GM12878 (cell line): ENCODE measurements at regions of chr3 and their contacts with region 1.

Region 1: DNA sequence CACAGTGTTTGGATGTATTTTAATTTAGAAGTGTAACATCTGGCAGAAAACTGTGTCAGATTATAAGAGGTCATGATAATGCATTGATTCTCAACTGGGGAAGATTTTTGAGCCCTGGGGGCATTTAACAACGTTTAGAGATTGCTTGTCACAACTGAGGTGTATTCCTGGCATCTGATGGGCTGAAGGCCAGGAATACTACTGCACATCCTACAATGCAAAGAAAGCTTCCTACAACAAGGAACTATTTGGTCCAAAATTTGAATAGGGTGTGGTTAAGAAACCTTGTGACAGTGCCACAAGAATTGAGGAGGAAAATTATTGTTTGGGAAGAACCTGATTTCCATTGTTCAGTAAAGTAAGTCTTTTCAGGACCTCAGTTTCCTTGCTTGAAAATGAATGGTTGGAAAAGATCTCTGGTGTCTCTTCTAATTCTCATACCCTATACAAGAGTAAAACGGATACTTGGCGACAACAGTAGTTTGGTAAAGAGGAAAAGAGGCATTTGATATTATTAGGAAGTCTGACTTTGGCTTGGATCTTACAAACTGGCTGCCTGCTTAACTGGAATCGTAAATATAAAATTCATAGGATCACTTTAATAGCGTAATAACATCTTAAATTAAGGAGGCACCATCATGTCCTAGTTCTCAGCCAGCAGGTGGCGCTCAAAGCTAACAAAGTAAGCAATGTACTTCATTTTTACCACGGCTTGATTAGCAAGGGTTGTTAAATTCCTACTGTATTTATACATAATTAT is 4.3 kb downstream of the DAZL start:
- DNase-seq: no peak
- ATAC-seq: peak; percentile 86
- H3K4me3 ChIP-seq: no peak overlapping the region
- H3K27ac ChIP-seq: no peak overlapping the region
- H3K4me1 ChIP-seq: peaks cover 7% of the 10 kb centered on the region
- H3K27me3 ChIP-seq: no peaks in the 10 kb centered on the region
- CTCF ChIP-seq: peak; percentile 56 to 81 (median 69)
- EP300 ChIP-seq: no peak
- POLR2A ChIP-seq: no peak
- RAD21 ChIP-seq: peak; percentile 96

Region 2: DNA sequence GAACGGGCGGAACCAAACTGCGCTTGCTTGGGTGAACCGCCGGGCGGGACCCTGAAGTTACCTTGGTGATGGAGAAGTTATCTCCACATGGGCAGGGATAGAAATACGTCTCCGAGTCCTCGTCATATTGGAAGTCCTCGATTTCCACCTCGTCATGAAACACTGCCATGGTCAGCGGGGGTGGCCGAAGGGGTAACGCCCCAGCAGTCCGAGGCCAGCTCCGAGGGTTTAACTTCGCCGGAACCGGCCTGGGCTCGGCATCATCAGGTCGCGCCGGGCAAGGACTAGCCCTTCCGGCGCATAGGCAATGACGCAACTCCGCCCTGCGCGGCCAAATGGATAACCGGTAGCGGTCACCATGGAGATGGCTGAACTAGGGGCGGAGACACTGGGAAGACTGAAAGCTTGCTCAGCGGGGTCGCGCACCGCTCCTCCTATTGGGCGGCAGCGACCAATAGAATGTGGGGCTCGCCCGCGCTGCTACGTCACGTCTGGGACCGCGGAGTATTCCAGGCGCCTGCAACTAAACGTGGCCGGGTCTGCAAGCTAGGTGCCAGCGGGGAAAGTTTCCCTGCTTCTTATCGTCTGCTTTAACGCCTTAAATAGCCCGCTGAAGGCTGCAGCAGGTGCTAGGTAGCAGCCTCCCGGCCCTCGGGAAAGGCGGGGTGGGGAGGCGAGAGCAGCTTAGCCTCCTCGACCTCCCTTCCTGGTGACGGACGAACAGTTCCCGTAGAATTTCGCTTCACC is 336.1 kb before region 1 on chr3 and contains the starts of genes DPH3 and OXNAD1:
- CTCF ChIA-PET with region 1: interaction called, 12 read pairs
- POLR2A ChIA-PET with region 1: no interaction called
- RAD21 ChIA-PET with region 1: interaction called, 4 read pairs
- SMC1A ChIA-PET with region 1: interaction called, 4 read pairs
- in situ Hi-C with region 1: no loop called
- intact Hi-C with region 1: no loop called
- DNase-seq: peak; percentile 95
- ATAC-seq: peak; percentile 98
- H3K4me3 ChIP-seq: peak within 1 kb of the TSS; percentile 91
- H3K27ac ChIP-seq: peak within 1 kb of the TSS; percentile 86
- H3K4me1 ChIP-seq: peaks cover 3% of the 10 kb centered on the region
- H3K27me3 ChIP-seq: no peaks in the 10 kb centered on the region
- CTCF ChIP-seq: no peak
- EP300 ChIP-seq: no peak
- POLR2A ChIP-seq: peak; percentile 58
- RAD21 ChIP-seq: no peak
- polyA plus RNA-seq, gene DPH3: 67.1 to 71.8 TPM
- polyA plus RNA-seq, gene OXNAD1: 5.6 to 6.9 TPM

Region 3: DNA sequence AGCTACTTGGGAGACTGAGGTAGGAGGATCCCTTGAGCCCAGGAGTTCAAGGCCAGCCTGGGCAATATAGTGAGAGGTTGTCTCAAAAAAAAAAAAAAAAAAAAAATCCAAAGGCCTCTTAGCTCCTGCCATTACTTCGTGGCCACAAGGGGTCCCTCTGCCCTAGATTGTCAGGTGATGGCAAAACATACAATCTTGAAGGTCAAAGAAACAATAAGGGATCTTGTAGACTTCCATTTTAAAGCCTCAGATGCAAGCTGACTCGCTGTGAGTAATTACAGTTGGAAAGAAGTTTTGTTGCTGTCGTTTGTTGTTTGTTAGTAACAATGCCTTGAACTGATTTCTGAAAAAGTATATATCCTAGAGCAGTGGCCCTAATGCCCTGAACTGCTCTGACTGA is 227.9 kb after region 1 on chr3:
- CTCF ChIA-PET with region 1: interaction called, 27 read pairs
- POLR2A ChIA-PET with region 1: no interaction called
- RAD21 ChIA-PET with region 1: interaction called, 7 read pairs
- SMC1A ChIA-PET with region 1: interaction called, 12 read pairs
- in situ Hi-C with region 1: no loop called
- intact Hi-C with region 1: loop called (anchors 5 kb)
- DNase-seq: no peak
- ATAC-seq: peak; percentile 90
- H3K4me3 ChIP-seq: no peak overlapping the region
- H3K27ac ChIP-seq: no peak overlapping the region
- H3K4me1 ChIP-seq: peaks cover 8% of the 10 kb centered on the region
- H3K27me3 ChIP-seq: no peaks in the 10 kb centered on the region
- CTCF ChIP-seq: peak; percentile 58 to 65 (median 60)
- EP300 ChIP-seq: no peak
- POLR2A ChIP-seq: no peak
- RAD21 ChIP-seq: peak; percentile 93

Region 4: DNA sequence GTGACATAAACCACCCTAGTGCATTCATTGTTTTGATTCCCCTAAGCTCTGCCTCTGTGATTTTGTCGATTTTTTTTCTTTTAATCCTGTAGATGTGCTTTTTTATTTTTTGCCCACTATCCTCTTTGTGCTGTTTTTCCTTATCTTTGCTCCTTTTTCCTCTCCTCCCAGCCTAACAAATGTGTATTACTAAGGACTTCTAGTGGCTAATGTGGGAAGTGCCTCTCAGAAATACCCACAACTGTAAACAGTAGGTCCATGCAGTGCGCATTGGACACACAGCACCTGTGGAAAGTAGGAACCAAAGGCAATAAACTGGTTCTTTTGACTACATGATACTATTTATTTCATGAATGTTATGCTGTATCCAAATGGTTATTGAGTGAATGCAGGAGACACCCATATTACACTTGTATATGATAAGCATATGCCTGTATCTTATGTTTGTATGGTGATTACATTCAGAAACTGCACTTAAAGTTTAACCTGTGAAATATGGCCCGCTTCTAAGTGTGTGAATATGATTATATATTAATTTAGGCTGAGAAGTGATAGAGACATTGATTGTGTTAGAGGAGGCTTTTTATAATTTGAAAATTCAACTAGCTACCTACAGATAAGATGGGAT is 431.6 kb after region 1 on chr3:
- CTCF ChIA-PET with region 1: interaction called, 5 read pairs
- POLR2A ChIA-PET with region 1: no interaction called
- RAD21 ChIA-PET with region 1: interaction called, 4 read pairs
- SMC1A ChIA-PET with region 1: interaction called, 5 read pairs
- in situ Hi-C with region 1: no loop called
- intact Hi-C with region 1: loop called (anchors 5 kb)
- DNase-seq: no peak
- ATAC-seq: peak; percentile 81
- H3K4me3 ChIP-seq: no peak overlapping the region
- H3K27ac ChIP-seq: no peak overlapping the region
- H3K4me1 ChIP-seq: peaks cover 15% of the 10 kb centered on the region
- H3K27me3 ChIP-seq: no peaks in the 10 kb centered on the region
- CTCF ChIP-seq: peak; percentile 54 to 64 (median 54); a peak in 5 of 6 replicates
- EP300 ChIP-seq: no peak
- POLR2A ChIP-seq: no peak
- RAD21 ChIP-seq: peak; percentile 76

Region 5: DNA sequence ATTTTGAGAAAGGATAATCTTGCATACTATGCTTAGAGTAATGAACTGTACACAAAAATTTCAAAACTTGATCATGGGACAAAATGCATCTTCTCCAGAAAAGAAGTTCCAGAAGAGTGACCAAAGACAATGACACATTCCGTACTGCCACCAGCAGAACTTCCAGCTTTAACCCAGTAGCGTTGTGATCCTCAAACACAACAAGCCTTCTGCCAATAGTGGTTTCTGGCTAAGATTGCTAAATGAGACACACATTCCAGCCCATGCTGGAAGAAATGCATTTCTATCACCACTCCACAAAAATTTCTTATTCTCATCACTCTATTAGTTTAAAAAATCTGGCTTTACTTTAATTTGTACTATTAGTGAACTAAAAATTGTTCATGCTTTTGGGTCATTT is 806.6 kb after region 1 on chr3:
- CTCF ChIA-PET with region 1: interaction called, 4 read pairs
- POLR2A ChIA-PET with region 1: no interaction called
- RAD21 ChIA-PET with region 1: no interaction called
- SMC1A ChIA-PET with region 1: interaction called, 3 read pairs
- in situ Hi-C with region 1: loop called (anchors 10 kb)
- intact Hi-C with region 1: loop called (anchors 2 kb)
- DNase-seq: no peak
- ATAC-seq: no peak
- H3K4me3 ChIP-seq: no peak overlapping the region
- H3K27ac ChIP-seq: no peak overlapping the region
- H3K4me1 ChIP-seq: no peaks in the 10 kb centered on the region
- H3K27me3 ChIP-seq: no peaks in the 10 kb centered on the region
- CTCF ChIP-seq: no peak
- EP300 ChIP-seq: no peak
- POLR2A ChIP-seq: no peak
- RAD21 ChIP-seq: no peak